ENCODE measurements at regions of chr16 and their contacts with region 1.

Region 1: GRCh38 chr16:68756250-68756915 is 19.3 kb downstream of the CDH1 start:
- DNase-seq: peak; percentile 93
- H3K4me3 Mint-ChIP-seq: peak overlapping the region; percentile 19
- H3K27ac Mint-ChIP-seq: peak overlapping the region; percentile 97
- H3K4me1 Mint-ChIP-seq: peaks cover 61% of the 10 kb centered on the region
- H3K27me3 Mint-ChIP-seq: no peaks in the 10 kb centered on the region

Region 2: DNA sequence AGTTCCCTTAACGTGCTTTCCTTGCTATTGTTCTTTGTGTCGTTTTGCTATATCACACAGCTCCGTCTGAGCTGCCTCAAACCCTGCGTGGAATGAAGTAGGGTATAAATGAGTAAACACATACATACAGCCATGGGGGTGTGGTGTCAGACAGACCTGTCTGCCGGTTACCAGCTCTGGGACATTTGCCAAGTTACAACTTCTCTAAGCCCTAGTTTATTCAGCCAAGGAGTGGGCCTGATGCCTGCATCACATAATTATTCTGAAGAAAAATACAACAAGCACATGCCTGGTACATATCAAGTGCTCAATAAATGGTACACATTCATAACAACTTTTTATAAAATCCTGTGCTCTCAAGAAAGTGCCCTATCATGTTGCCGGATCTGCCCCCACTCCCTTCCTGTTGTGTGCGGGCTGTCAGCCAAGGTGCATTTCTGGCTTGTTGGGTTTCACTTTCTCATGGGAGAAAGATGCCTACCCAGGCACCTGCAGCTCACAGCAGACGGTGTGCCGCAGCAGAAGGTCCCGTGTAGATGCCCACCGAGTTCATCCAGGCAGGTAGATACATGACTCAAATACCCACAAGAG is 338.6 kb before region 1 on chr16:
- CTCF ChIA-PET with region 1: no interaction called
- intact Hi-C with region 1: loop called (anchors 5 kb)
- DNase-seq: peak; percentile 89
- H3K4me3 Mint-ChIP-seq: peak overlapping the region; percentile 66
- H3K27ac Mint-ChIP-seq: peak overlapping the region; percentile 92
- H3K4me1 Mint-ChIP-seq: peaks cover 52% of the 10 kb centered on the region
- H3K27me3 Mint-ChIP-seq: no peaks in the 10 kb centered on the region

Region 3: DNA sequence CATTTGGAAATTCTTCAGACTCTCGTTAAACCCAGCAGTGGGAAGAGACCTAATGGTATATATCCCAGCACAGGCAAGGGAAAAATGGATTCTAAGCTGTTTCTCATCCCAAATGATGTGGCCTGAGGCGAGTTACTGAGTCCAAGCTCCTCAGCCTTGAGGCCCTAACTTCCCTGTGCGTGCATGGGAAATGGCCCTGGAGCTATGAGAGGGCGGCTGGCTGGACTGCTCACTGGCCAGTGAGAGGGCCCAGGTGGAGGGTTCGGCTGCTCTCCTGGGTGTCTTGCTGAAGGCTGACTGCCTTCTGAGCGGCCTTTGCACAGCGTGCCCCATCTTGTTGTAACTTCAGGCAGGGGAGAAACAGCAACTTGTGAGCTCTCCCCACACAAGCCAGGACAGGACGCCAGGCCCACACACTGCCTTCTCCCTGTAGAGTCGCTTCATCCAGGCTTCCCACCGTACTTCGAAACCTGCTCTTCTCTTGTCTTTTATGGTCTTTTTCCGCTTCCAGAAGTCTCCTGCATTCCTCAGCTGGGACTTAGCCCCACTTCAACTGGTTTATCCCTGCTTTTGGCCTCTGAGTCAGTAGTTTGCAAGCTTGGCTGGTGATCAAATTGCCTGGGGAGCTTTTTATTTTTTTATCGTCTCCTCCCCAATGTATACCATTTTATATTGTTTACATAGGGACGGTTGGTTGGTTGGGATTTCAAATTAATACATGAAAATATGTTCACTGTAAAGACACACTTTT is 98.0 kb before region 1 on chr16:
- CTCF ChIA-PET with region 1: no interaction called
- intact Hi-C with region 1: loop called (anchors 2 kb)
- DNase-seq: no peak
- H3K4me3 Mint-ChIP-seq: no peak overlapping the region
- H3K27ac Mint-ChIP-seq: no peak overlapping the region
- H3K4me1 Mint-ChIP-seq: peaks cover 13% of the 10 kb centered on the region
- H3K27me3 Mint-ChIP-seq: peaks cover 23% of the 10 kb centered on the region

Region 4: DNA sequence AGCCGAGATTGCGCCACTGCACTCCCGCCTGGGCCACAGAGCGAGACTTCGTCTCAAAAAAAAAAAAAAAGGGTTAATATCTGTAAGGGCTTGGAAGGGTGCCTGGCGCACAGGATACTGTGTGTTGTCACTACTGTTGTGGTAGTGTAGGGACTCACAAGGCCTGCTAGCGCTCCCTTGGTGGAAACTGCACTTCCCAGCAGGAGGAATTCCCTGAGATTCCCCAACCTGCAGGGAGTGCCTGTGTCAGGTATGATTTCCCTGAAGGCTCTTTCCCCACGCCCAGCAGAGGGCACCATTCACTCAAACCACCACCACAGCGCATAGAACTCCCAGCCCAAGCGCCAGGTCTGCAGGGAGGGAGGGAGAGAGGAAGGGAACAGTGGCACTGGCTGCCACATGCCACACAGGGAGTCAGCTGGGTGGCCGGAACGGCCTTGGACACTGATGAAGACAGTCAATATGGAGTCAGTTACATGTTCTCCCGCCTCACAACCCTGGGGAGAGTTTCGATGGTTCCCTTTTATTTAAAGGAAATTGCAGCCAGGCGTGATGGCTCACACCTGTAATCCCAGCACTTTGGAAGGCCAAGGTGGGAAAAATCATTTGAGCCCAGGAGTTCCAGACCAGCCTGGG is 52.0 kb before region 1 on chr16:
- CTCF ChIA-PET with region 1: no interaction called
- intact Hi-C with region 1: loop called (anchors 1 kb)
- DNase-seq: peak; percentile 85
- H3K4me3 Mint-ChIP-seq: no peak overlapping the region
- H3K27ac Mint-ChIP-seq: no peak overlapping the region
- H3K4me1 Mint-ChIP-seq: peaks cover 3% of the 10 kb centered on the region
- H3K27me3 Mint-ChIP-seq: no peaks in the 10 kb centered on the region

Region 5: DNA sequence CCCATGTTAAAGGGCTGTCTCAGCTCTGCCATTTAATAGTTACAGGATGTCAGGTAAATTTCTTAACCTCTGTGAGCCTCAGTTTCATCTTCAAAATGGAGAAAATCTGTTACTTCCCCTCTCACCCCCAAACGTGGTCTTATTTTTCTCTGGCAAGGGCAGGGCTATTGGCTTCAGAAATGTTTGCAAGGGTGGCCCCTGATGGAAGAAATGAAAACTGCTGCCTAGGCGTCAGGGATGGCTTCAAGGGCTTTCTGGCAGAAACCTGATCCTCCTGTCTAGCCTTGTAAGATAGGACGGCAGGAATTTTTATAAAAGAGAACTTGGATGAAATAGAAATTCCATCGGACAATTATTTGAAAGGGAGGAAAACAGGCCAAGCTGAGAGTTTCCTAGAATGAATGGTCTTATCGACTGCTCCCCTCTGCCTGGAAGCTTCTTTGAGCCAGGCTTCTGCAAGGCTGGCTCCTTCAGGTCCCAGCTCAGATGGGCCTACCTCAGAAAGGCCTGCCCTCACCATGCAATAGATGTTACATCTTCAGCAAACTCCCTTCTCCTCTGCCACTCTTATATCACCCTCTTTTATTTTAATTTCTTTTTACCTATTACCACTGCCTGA is 44.0 kb after region 1 on chr16:
- CTCF ChIA-PET with region 1: interaction called, 16 read pairs
- intact Hi-C with region 1: loop called (anchors 1 kb)
- DNase-seq: peak; percentile 86
- H3K4me3 Mint-ChIP-seq: no peak overlapping the region
- H3K27ac Mint-ChIP-seq: peak overlapping the region; percentile 30
- H3K4me1 Mint-ChIP-seq: peaks cover 3% of the 10 kb centered on the region
- H3K27me3 Mint-ChIP-seq: no peaks in the 10 kb centered on the region

Region 6: GRCh38 chr16:69166221-69166833 is 409.9 kb after region 1 on chr16:
- CTCF ChIA-PET with region 1: no interaction called
- intact Hi-C with region 1: loop called (anchors 1 kb)
- DNase-seq: peak; percentile 88
- H3K4me3 Mint-ChIP-seq: peak overlapping the region; percentile 23
- H3K27ac Mint-ChIP-seq: peak overlapping the region; percentile 75
- H3K4me1 Mint-ChIP-seq: peaks cover 46% of the 10 kb centered on the region
- H3K27me3 Mint-ChIP-seq: no peaks in the 10 kb centered on the region

Measured in activated naive CD4-positive, alpha-beta T cell treated with anti-CD3 and anti-CD28 coated beads for 36 hours (primary cell).